Dendritic cell treated with granulocyte-macrophage colony-stimulating factor and Interleukin-4, amounts not matched to agents 40 ng/mL and 50 ng/mL, for 4 days (primary cell): ENCODE measurements at regions of chr3 and their contacts with region 1.

Region 1: DNA sequence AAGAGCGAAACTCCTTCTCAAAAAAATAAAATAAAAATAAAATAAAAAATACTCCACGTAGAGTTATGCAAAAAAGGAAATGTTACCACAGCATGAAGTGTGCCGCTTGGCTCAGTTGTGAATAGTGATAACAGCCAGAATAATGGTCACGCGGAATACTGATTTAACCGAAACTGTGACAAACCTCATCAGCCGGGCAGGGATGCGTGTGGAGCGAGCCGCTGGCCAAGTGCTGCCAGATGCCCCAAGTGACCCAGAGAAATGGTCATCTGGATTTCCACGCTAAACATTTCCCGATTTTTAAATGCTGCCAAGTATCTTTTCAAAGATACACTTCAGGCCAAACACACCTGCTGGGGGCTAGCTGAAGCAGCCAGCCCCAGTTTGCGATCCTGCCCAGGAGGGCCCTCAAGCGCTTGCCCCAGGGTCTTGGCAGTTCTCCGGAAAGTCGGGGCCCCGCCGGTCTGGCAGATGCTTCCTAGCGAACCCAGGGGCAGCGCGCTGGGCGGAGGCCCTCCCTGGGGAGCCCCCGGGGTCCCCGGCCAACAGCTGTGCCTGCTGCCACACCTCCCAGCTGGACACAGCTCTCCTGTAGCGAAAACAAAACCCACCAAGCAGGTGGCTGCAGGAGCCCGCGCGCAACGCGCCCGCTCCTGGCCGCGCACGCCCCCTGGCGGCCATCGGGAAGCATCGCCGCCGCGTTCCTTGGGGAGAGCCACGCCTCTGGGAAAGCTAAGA is 35.1 kb downstream of the CMTM6 start:
- H3K4me3 Mint-ChIP-seq: no peak overlapping the region
- H3K27ac Mint-ChIP-seq: no peak overlapping the region
- H3K4me1 Mint-ChIP-seq: peaks cover 60% of the 10 kb centered on the region
- H3K27me3 Mint-ChIP-seq: no peaks in the 10 kb centered on the region

Region 2: DNA sequence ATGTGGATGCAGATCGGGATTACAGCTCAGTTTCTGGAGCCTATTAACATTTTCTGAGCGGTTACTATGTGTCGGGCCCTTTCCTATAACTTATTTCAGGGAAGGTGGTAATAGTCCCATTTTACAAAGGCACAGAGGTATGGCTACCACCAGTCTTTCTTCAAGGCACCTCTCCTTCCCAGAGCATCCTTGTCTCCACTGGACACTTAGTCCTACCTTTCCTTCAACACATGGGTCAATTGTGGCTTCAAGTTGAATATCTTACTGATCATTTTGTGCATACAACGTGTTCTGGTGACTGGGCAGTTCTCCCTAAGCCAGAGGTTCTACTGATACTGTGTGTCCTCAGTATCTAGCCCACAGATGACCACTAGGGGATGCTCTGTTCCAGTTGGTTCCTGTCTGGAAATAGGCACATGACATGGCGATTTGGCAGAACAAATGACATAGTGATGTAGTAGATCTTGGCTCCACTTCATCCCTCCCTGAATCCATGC is 289.8 kb before region 1 on chr3:
- intact Hi-C with region 1: loop called (anchors 10 kb)
- H3K4me3 Mint-ChIP-seq: no peak overlapping the region
- H3K27ac Mint-ChIP-seq: no peak overlapping the region
- H3K4me1 Mint-ChIP-seq: peaks cover 19% of the 10 kb centered on the region
- H3K27me3 Mint-ChIP-seq: peaks cover 13% of the 10 kb centered on the region

Region 3: DNA sequence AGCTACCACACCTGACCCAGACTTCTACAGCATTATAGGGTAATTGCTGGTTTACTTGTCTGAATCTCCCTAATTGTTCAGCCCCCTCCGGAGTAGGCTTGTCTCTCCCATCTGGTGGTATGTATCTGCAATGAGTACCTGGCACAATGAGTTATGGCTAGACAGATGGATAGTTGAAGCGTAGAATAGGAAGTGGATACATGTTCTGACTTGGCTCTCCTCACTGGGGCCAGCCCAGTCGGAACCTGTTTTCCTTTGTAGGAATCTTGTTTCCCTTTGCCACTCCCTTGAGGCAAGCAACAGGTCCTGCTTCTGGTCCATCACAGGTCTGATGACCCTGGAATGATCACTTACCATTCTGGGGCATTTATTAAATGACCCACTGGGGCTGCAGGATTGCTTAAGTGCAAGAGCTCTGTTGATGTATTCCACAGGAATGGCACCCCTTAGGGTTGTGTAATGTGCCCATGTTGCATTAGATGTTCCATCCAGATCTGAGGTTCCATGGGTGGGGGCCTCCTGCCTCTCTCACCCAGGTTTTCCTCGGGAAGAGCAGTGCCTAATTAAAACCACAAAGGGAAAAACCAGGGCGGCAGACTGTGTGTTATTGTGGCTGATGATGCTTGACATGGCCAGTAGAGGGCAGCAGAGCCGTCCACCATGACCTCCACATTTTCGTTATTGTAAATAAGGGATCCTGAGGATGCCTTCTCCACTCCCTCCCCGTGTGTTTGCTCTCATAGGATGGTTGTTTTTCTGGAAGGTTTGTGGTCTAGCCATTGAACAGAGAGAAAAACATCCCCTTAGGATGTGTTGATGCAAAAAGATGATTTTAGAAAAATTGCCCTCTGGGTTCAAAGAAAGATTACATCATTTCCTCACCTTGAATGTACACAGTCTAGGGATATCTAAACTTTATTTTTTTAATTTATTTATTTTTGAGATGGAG is 171.0 kb before region 1 on chr3:
- intact Hi-C with region 1: loop called (anchors 2 kb)
- H3K4me3 Mint-ChIP-seq: no peak overlapping the region
- H3K27ac Mint-ChIP-seq: no peak overlapping the region
- H3K4me1 Mint-ChIP-seq: peaks cover 5% of the 10 kb centered on the region
- H3K27me3 Mint-ChIP-seq: no peaks in the 10 kb centered on the region

Region 4: GRCh38 chr3:32374788-32375595 is 92.5 kb before region 1 on chr3:
- intact Hi-C with region 1: loop called (anchors 1 kb)
- H3K4me3 Mint-ChIP-seq: no peak overlapping the region
- H3K27ac Mint-ChIP-seq: no peak overlapping the region
- H3K4me1 Mint-ChIP-seq: peaks cover 18% of the 10 kb centered on the region
- H3K27me3 Mint-ChIP-seq: no peaks in the 10 kb centered on the region

Region 5: GRCh38 chr3:32420126-32421038 is 47.1 kb before region 1 on chr3:
- intact Hi-C with region 1: loop called (anchors 5 kb)
- H3K4me3 Mint-ChIP-seq: peak overlapping the region; percentile 45
- H3K27ac Mint-ChIP-seq: peak overlapping the region; percentile 91
- H3K4me1 Mint-ChIP-seq: peaks cover 80% of the 10 kb centered on the region
- H3K27me3 Mint-ChIP-seq: no peaks in the 10 kb centered on the region

Region 6: GRCh38 chr3:32502118-32502945 is 34.8 kb after region 1 on chr3 and contains the start of gene CMTM6:
- intact Hi-C with region 1: loop called (anchors 5 kb)
- H3K4me3 Mint-ChIP-seq: peak within 1 kb of the TSS; percentile 98
- H3K27ac Mint-ChIP-seq: peak within 1 kb of the TSS; percentile 99
- H3K4me1 Mint-ChIP-seq: peaks cover 40% of the 10 kb centered on the region
- H3K27me3 Mint-ChIP-seq: no peaks in the 10 kb centered on the region

Region 7: GRCh38 chr3:32616267-32616963 is 148.9 kb after region 1 on chr3:
- intact Hi-C with region 1: no loop called
- H3K4me3 Mint-ChIP-seq: no peak overlapping the region
- H3K27ac Mint-ChIP-seq: no peak overlapping the region
- H3K4me1 Mint-ChIP-seq: no peaks in the 10 kb centered on the region
- H3K27me3 Mint-ChIP-seq: peaks cover 2% of the 10 kb centered on the region